B cell (primary cell): ENCODE measurements at regions of chr12 and their contacts with region 1.

Region 1: DNA sequence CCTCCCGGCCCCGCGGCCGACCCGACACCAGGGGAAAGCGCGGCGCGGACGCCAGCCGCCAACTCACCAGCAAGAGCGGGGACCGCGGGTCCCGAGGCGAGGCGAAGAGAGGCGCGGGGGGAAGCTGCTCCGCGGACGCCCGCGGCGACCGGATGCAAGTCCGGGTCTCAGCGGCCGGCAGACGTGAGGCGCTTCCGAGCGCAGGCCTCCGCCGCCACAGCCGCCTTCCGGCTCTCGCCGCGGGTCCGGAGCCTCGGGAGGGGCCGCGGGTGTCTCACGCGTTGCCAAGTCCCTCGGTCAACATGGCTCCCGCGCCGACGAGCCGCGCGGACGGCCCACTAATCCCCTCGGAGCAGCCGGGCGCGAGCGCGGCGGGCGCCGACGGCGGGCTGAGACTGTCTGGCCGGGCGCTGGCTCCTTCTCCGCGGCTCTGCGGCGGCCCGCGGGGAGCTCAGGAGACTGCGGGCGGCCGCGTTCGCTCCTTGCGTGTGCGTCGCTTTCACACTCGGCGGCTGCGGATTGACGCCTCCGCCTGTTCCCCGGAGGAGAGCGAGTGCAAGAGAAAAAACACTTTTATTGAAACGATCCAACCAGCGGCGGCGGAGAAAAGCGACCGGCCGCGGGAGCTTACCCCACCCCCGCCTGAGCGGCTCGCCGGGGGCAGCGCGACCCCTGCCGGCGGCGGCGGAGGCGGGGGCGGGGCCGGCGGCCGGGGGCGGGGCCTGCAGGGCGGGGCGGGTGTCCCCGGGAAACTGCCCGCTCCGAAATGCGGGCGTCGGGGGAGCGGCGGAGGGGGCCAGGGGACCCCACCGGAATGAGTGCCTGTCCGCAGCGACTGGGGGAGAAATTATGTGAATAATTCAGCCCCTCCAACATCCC is at the start of gene CDK17:
- DNase-seq: peak; percentile 95
- ATAC-seq: peak; percentile 73
- H3K4me3 ChIP-seq: peak within 1 kb of the TSS; percentile 73 to 98 (median 86)
- H3K4me3 Mint-ChIP-seq: peak within 1 kb of the TSS; percentile 95
- H3K27ac ChIP-seq: peak within 1 kb of the TSS; percentile 77 to 99
- H3K27ac Mint-ChIP-seq: peak within 1 kb of the TSS; percentile 98
- H3K4me1 ChIP-seq: peaks cover 21 to 28% of the 10 kb centered on the region in 2 donors
- H3K4me1 Mint-ChIP-seq: peaks cover 53% of the 10 kb centered on the region
- H3K27me3 ChIP-seq: no peaks in the 10 kb centered on the region
- H3K27me3 Mint-ChIP-seq: no peaks in the 10 kb centered on the region
- CTCF ChIP-seq: no peak
- total RNA-seq, gene CDK17: 87.8 and 96.3 TPM in 2 replicates

Region 2: DNA sequence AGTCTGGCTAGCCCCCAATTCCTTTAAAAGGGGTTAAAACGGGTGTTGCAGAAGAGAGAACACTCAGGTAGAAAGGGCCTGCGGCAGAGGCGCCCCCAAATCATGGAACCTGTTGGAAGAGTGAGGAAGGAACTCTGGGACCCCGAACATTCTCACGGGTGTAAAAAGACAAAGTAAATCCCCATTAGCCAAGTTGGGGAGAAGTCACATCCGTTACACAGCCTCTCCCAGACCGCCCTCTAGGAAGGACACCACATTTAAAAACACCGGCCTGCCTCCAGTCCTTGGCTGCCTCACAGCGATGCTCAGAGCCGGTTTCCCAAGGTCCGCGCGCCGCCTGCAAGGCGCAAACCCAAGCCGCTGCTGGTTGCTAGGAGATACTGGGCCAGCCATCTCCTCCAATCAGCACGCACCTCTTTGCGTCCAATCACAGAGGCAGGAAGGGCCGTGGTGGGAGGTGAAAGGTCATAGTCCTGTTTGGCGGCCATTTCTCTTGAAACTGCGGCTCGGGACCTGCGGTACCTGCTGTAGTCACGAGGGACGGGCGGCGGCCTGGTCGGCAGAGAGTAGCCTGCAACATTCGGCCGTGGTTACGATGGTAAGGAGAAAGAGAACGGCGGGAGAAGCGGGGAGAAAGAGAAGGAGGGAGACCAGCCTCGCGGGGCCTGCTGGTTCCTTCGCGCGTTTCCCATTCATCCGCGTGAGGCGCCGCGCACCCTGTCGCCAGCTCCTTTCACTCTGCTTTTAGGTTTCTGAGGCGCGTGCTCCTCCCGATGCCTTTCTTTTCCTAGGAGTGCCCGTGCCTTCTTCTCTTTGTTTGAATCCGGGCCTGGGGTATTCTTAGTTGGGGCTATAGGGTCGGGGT is 541.4 kb before region 1 on chr12 and contains the start of gene SNRPF:
- CTCF ChIA-PET with region 1: no interaction called
- POLR2A ChIA-PET with region 1: no interaction called
- intact Hi-C with region 1: loop called (anchors 10 kb)
- DNase-seq: peak; percentile 97
- ATAC-seq: peak; percentile 96
- H3K4me3 ChIP-seq: peak within 1 kb of the TSS; percentile 70 to 89 (median 76)
- H3K4me3 Mint-ChIP-seq: no peak within 1 kb of the TSS
- H3K27ac ChIP-seq: peak within 1 kb of the TSS; percentile 83 to 95
- H3K27ac Mint-ChIP-seq: peak within 1 kb of the TSS; percentile 37
- H3K4me1 ChIP-seq: peaks cover 24 to 28% of the 10 kb centered on the region in 2 donors
- H3K4me1 Mint-ChIP-seq: peaks cover 14% of the 10 kb centered on the region
- H3K27me3 ChIP-seq: peaks cover 0 to 11% (median 9%) of the 10 kb centered on the region in 4 experiments
- H3K27me3 Mint-ChIP-seq: peaks cover 9% of the 10 kb centered on the region
- CTCF ChIP-seq: peak; percentile 18
- total RNA-seq, gene SNRPF: 23.8 and 25.5 TPM in 2 replicates

Region 3: DNA sequence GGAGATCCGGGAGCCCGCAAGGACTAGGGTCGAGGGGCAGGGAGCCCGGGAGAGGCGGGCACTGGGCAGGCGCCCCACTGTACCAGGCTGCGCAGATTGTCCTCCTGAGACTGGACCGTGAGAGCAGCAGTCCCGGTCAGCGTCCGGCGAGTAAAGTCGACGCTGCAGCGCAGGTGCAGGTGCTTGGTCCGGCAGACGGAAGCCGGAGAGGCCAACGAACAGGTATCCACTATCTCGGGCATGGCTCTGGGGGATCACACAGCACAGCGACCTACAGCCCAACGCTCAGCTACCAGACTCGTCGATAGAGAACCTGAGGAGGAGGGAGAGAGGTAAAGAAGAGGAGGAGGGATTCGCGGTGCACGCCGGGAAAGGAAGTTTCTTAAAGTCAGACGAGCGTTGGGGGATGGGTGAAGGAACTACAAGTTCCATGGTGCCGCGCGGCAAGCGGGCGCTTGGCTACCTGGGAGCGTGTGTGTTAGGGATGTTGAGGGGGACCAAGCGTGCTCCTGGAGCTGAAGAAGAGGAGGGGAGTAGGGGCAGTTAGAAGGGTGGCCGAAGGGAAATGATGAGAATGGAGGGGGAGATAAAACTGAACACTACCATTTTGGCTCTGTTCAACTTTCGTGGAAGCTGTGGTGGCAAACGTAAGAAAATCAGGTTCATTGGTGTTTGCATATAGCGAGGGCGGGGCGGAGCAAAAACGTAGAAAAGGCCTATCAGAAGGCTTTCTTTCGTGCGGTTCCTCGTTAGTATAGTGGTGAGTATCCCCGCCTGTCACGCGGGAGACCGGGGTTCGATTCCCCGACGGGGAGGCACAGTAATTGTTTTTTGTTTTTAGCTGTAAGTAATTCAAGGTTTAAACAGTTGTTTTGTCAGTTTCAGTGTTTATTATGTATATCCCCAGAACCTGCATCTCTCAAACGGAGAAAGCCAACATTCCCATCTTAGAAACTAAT is 364.6 kb before region 1 on chr12 and contains the start of gene LTA4H:
- CTCF ChIA-PET with region 1: no interaction called
- POLR2A ChIA-PET with region 1: interaction called, 3 read pairs
- intact Hi-C with region 1: loop called (anchors 2 kb)
- DNase-seq: peak; percentile 100
- ATAC-seq: peak; percentile 90
- H3K4me3 ChIP-seq: peak within 1 kb of the TSS; percentile 62 to 99 (median 92)
- H3K4me3 Mint-ChIP-seq: no peak within 1 kb of the TSS
- H3K27ac ChIP-seq: peak within 1 kb of the TSS; percentile 64 to 69
- H3K27ac Mint-ChIP-seq: no peak within 1 kb of the TSS
- H3K4me1 ChIP-seq: peaks cover 40 to 44% of the 10 kb centered on the region in 2 donors
- H3K4me1 Mint-ChIP-seq: peaks cover 15% of the 10 kb centered on the region
- H3K27me3 ChIP-seq: no peaks in the 10 kb centered on the region
- H3K27me3 Mint-ChIP-seq: no peaks in the 10 kb centered on the region
- CTCF ChIP-seq: no peak
- total RNA-seq, gene LTA4H: 158 and 167 TPM in 2 replicates

Region 4: DNA sequence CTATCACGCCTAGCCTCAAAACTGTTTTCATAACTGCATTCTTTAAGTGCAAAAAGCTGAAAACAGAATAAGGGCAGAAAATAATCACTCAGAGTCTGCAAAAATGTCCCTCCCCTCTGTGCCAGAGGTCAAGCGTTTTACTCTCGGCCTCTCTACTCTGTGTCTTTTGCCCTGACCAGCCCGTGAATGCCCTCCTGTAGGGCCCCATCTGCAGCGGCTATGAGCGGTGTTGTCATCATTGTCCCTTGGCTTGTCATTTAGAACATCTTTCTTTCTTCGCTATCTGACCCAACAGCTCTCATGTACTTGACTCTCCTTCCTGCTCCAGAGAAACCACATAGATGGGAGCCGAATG is 184.3 kb before region 1 on chr12:
- CTCF ChIA-PET with region 1: interaction called, 28 read pairs
- POLR2A ChIA-PET with region 1: no interaction called
- intact Hi-C with region 1: loop called (anchors 1 kb)
- DNase-seq: no peak
- ATAC-seq: no peak
- H3K4me3 ChIP-seq: no peak overlapping the region
- H3K4me3 Mint-ChIP-seq: no peak overlapping the region
- H3K27ac ChIP-seq: peak overlapping the region in 1 of 2 donors; percentile 20
- H3K27ac Mint-ChIP-seq: peak overlapping the region; percentile 1
- H3K4me1 ChIP-seq: peaks cover 41 to 45% of the 10 kb centered on the region in 2 donors
- H3K4me1 Mint-ChIP-seq: peaks cover 50% of the 10 kb centered on the region
- H3K27me3 ChIP-seq: no peaks in the 10 kb centered on the region
- H3K27me3 Mint-ChIP-seq: no peaks in the 10 kb centered on the region
- CTCF ChIP-seq: no peak

Region 5: DNA sequence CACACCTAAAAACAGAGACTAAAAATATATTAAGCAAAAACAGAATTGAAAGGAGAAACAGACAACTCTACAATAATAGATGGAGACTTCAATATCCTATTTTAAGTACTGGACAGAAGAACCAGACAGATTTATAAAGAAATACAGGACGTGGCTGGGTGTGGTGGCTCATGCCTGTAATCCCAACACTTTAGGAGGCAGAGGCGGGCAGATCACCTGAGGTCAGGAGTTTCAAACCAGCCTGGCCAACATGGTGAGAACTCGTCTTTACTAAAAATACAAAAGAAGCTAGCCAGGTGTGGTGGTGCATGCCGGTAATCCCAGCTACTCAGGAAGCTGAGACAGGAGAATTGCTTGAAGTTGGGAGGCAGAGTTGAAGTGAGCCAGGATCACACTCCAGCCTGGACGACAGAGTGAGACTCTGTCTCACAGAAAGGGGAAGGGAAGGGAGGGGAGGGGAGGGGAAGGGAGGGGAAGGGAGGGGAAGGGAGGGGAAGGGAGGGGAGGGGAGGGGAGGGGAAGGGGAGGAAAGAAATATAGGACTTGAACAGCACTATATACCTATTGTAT is 52.9 kb before region 1 on chr12:
- CTCF ChIA-PET with region 1: no interaction called
- POLR2A ChIA-PET with region 1: no interaction called
- intact Hi-C with region 1: loop called (anchors 5 kb)
- DNase-seq: no peak
- ATAC-seq: no peak
- H3K4me3 ChIP-seq: peak overlapping the region in 3 of 5 experiments; percentile 10 to 18 (median 13)
- H3K4me3 Mint-ChIP-seq: peak overlapping the region; percentile 75
- H3K27ac ChIP-seq: peak overlapping the region in 1 of 2 donors; percentile 71
- H3K27ac Mint-ChIP-seq: peak overlapping the region; percentile 71
- H3K4me1 ChIP-seq: peaks cover 21 to 34% of the 10 kb centered on the region in 2 donors
- H3K4me1 Mint-ChIP-seq: peaks cover 55% of the 10 kb centered on the region
- H3K27me3 ChIP-seq: no peaks in the 10 kb centered on the region
- H3K27me3 Mint-ChIP-seq: no peaks in the 10 kb centered on the region
- CTCF ChIP-seq: no peak

Region 6: DNA sequence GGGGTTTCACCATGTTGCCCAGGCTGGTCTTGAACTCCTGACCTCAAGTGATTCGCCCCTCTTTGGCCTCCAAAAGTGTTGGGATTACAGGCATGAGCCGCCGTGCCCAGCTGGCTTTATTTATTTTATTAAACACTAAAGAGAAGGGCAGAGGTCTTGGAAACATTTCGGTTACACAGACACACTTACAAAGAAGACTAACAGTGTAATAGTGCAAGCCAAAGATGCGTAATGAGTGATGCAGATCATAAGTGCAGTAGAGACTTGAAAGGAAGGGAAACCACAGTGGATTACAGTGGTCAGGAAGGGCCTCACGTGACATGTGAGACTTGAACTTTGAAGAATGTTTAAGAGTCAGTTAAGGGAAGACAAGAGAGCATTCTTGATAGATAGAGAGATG is 33.9 kb after region 1 on chr12:
- CTCF ChIA-PET with region 1: no interaction called
- POLR2A ChIA-PET with region 1: no interaction called
- intact Hi-C with region 1: no loop called
- DNase-seq: peak; percentile 40
- ATAC-seq: peak; percentile 58
- H3K4me3 ChIP-seq: no peak overlapping the region
- H3K4me3 Mint-ChIP-seq: no peak overlapping the region
- H3K27ac ChIP-seq: no peak overlapping the region
- H3K27ac Mint-ChIP-seq: no peak overlapping the region
- H3K4me1 ChIP-seq: peaks cover 0 to 4% of the 10 kb centered on the region in 2 donors
- H3K4me1 Mint-ChIP-seq: peaks cover 5% of the 10 kb centered on the region
- H3K27me3 ChIP-seq: no peaks in the 10 kb centered on the region
- H3K27me3 Mint-ChIP-seq: no peaks in the 10 kb centered on the region
- CTCF ChIP-seq: no peak

Region 7: GRCh38 chr12:96489103-96490056 is 89.2 kb after region 1 on chr12 and contains the start of gene CFAP54:
- CTCF ChIA-PET with region 1: interaction called, 5 read pairs
- POLR2A ChIA-PET with region 1: interaction called, 3 read pairs
- intact Hi-C with region 1: loop called (anchors 1 kb)
- DNase-seq: peak; percentile 96
- ATAC-seq: peak; percentile 91
- H3K4me3 ChIP-seq: peak within 1 kb of the TSS; percentile 35 to 75 (median 67)
- H3K4me3 Mint-ChIP-seq: peak within 1 kb of the TSS; percentile 90
- H3K27ac ChIP-seq: peak within 1 kb of the TSS in 1 of 2 donors; percentile 69
- H3K27ac Mint-ChIP-seq: peak within 1 kb of the TSS; percentile 86
- H3K4me1 ChIP-seq: peaks cover 8 to 10% of the 10 kb centered on the region in 2 donors
- H3K4me1 Mint-ChIP-seq: peaks cover 16% of the 10 kb centered on the region
- H3K27me3 ChIP-seq: peaks cover 0 to 6% (median 3%) of the 10 kb centered on the region in 4 experiments
- H3K27me3 Mint-ChIP-seq: no peaks in the 10 kb centered on the region
- CTCF ChIP-seq: peak; percentile 89
- total RNA-seq, gene CFAP54: 0.24 and 0.76 TPM in 2 replicates

Region 8: GRCh38 chr12:96766232-96766631 is 366.1 kb after region 1 on chr12:
- CTCF ChIA-PET with region 1: no interaction called
- POLR2A ChIA-PET with region 1: no interaction called
- intact Hi-C with region 1: no loop called
- DNase-seq: no peak
- ATAC-seq: no peak
- H3K4me3 ChIP-seq: no peak overlapping the region
- H3K4me3 Mint-ChIP-seq: no peak overlapping the region
- H3K27ac ChIP-seq: no peak overlapping the region
- H3K27ac Mint-ChIP-seq: no peak overlapping the region
- H3K4me1 ChIP-seq: no peaks in the 10 kb centered on the region
- H3K4me1 Mint-ChIP-seq: no peaks in the 10 kb centered on the region
- H3K27me3 ChIP-seq: peaks cover 0 to 2% (median 0%) of the 10 kb centered on the region in 4 experiments
- H3K27me3 Mint-ChIP-seq: peaks cover 12% of the 10 kb centered on the region
- CTCF ChIP-seq: no peak

Region 9: DNA sequence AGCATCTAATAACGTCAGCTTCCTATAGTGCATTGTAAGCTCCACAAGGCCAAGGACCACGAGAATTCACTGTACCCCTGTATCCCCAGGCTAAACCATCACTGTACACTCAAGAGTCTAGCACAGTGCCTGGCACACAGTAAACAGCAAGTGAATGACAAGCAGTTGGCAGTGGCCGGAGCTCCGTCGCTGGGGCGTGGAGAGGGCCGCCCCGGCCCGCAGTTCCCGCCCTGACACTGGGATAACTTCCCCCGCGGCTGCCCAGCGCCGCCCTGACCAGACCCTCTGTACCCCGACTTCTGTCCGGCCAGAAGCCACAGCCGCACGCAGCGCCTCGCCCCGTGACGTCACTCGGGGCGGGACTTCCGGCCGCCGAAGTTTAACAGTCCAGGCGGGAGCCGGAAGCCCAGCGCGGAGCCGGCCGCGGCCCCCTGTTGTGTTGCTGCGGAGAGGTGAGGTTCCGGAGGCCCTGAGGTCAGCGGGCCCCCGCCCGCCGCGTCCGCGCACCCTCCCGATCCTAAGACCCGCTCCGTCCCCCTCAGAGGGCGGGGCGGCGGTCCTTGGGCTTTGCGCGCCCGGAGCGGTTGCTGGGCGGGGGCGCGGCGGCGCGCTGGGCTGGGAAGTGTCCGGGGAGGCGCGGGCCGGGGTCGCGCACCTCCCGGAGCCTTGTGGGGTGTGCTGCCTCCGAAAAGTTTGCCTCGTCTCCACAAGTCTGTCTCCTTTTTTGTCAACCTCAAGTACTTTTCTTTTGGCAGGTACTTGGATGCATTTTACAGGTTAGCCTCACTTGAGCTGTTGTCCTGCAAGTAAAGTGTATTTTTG is 506.9 kb after region 1 on chr12 and contains the start of gene NEDD1:
- CTCF ChIA-PET with region 1: no interaction called
- POLR2A ChIA-PET with region 1: no interaction called
- intact Hi-C with region 1: loop called (anchors 5 kb)
- DNase-seq: peak; percentile 89
- ATAC-seq: peak; percentile 85
- H3K4me3 ChIP-seq: peak within 1 kb of the TSS; percentile 82 to 98 (median 94)
- H3K4me3 Mint-ChIP-seq: peak within 1 kb of the TSS; percentile 97
- H3K27ac ChIP-seq: peak within 1 kb of the TSS; percentile 91 to 96
- H3K27ac Mint-ChIP-seq: peak within 1 kb of the TSS; percentile 97
- H3K4me1 ChIP-seq: peaks cover 17 to 21% of the 10 kb centered on the region in 2 donors
- H3K4me1 Mint-ChIP-seq: peaks cover 42% of the 10 kb centered on the region
- H3K27me3 ChIP-seq: no peaks in the 10 kb centered on the region
- H3K27me3 Mint-ChIP-seq: no peaks in the 10 kb centered on the region
- CTCF ChIP-seq: no peak
- total RNA-seq, gene NEDD1: 16.8 and 20.3 TPM in 2 replicates